ENCODE measurements at regions of chr3 and their contacts with region 1.

Region 1: GRCh38 chr3:142828703-142829305 is 60.1 kb downstream of the PCOLCE2 start:
- DNase-seq: no peak
- H3K4me3 ChIP-seq: no peak overlapping the region
- H3K27ac ChIP-seq: no peak overlapping the region
- H3K4me1 ChIP-seq: no peaks in the 10 kb centered on the region
- H3K27me3 ChIP-seq: peaks cover 0 to 4% (median 0%) of the 10 kb centered on the region in 4 donors
- CTCF ChIP-seq: peak in 5 of 6 experiments; percentile 72 to 89 (median 75)
- POLR2A ChIP-seq: no peak

Region 2: GRCh38 chr3:142993958-142994442 is 165.2 kb after region 1 on chr3:
- intact Hi-C with region 1: loop called (anchors 5 kb)
- DNase-seq: no peak
- H3K4me3 ChIP-seq: no peak overlapping the region
- H3K27ac ChIP-seq: no peak overlapping the region
- H3K4me1 ChIP-seq: no peaks in the 10 kb centered on the region
- H3K27me3 ChIP-seq: peaks cover 0 to 6% (median 0%) of the 10 kb centered on the region in 4 donors
- CTCF ChIP-seq: peak; percentile 26 to 65 (median 43)
- POLR2A ChIP-seq: no peak